Adrenal gland (tissue), 19 donors: ENCODE measurements at regions of chr3 and their contacts with region 1.

Region 1: GRCh38 chr3:138915503-138916498 is 31.1 kb downstream of the FOXL2 start:
- DNase-seq: peak; percentile 91 to 94 (median 93)
- H3K4me3 ChIP-seq: peak overlapping the region; percentile 68 to 90 (median 74)
- H3K27ac ChIP-seq: peak overlapping the region; percentile 39 to 94 (median 89)
- H3K4me1 ChIP-seq: peaks cover 5% of the 10 kb centered on the region in 2 donors
- H3K27me3 ChIP-seq: no peaks in the 10 kb centered on the region
- CTCF ChIP-seq: peak; percentile 84 to 97 (median 92)
- POLR2A ChIP-seq: peak in 1 of 2 donors; percentile 34

Region 2: DNA sequence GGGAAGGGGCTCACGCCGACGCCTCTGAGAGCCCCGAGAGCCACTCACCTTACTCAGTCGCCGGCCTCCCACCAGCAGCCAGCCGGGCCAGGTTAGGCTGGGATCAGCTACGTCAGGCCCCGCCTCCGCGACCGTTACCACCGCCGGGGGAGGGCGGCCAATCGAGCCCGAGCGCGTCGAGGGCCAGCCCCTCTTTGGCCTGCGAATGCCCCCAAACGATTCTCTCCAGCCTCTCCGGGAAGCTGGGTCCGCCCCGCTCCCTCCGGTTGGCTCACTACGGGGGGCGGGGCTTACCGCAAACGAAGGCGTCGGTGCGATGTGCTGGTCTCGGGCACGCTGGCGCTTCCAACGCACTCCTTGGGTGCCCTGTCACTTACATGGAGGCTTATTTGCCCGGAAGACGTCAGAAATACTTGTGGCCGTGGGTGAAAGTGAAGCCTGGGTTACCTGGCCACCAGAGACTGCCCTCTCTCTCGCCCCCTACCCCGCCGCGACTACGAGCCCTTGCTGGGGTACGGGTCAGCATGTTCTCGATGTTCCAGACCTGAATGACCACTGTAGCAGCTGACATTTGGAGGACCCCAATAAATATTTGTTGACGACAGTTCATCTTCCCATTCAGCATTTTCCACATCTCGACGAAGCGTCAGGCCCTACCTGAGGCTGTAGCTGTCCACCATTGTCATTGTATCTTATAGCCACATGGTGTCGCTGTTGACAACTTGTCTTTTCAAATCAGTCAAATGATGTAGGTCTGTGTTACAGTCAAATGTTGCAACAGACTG is 321.5 kb before region 1 on chr3 and contains the start of gene CEP70:
- intact Hi-C with region 1: loop called (anchors 2 to 5 kb)
- DNase-seq: peak; percentile 94 to 97 (median 96)
- H3K4me3 ChIP-seq: peak within 1 kb of the TSS in 3 of 4 donors; percentile 49 to 87 (median 60)
- H3K27ac ChIP-seq: peak within 1 kb of the TSS; percentile 86 to 98 (median 95)
- H3K4me1 ChIP-seq: peaks cover 5 to 11% of the 10 kb centered on the region in 2 donors
- H3K27me3 ChIP-seq: no peaks in the 10 kb centered on the region
- CTCF ChIP-seq: peak; percentile 77 to 98 (median 92)
- POLR2A ChIP-seq: peak; percentile 90 to 95
- total RNA-seq, gene CEP70: 7.8 to 26.9 (median 17.1) TPM

Region 3: GRCh38 chr3:138608322-138609135 is 307.3 kb before region 1 on chr3 and contains the start of gene FAIM:
- intact Hi-C with region 1: loop called in 1 of 2 experiments (anchors 5 kb)
- DNase-seq: peak; percentile 70 to 86 (median 80)
- H3K4me3 ChIP-seq: peak within 1 kb of the TSS; percentile 3 to 99 (median 78)
- H3K27ac ChIP-seq: peak within 1 kb of the TSS; percentile 59 to 99 (median 97)
- H3K4me1 ChIP-seq: peaks cover 0 to 10% of the 10 kb centered on the region in 2 donors
- H3K27me3 ChIP-seq: no peaks in the 10 kb centered on the region
- CTCF ChIP-seq: no peak
- POLR2A ChIP-seq: peak; percentile 34 to 46
- total RNA-seq, gene FAIM: 5.5 to 15.2 (median 7.8) TPM

Region 4: DNA sequence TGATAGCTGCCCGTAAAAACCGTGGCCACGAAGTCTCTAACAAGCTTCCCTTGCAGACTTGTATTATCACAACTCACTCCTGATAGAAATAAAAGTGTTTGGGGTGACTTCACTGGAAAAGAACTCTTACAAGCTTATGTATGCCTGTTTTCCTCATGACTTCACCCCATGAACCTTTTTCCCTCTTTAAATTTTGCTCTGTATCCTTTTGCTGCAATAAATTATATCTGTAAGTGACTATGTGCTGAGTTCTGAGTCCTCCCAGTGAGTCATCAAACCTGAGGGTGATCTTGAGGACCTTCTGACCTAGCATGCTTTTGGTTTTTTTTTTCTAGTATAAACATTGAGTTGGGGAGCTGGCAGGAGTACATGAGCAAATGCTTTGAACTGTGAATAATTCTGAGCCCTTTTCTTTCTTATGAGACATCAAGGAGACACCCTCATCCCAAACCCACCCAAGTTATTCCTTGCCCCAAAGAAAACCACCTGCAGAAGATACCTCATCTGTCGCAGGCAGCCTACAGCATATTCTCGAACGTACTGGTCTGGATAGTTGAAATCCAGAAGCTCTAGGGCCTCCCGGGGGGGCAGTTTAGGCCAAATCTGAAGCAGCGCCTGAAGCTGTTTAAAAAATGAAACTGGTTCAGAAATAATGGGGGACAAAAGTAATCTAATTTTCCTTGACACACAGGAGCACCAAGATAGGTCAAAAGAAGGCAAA is 221.4 kb before region 1 on chr3:
- intact Hi-C with region 1: loop called in 1 of 2 experiments (anchors 5 kb)
- DNase-seq: peak in 3 of 7 donors; percentile 16 to 48 (median 30)
- H3K4me3 ChIP-seq: no peak overlapping the region
- H3K27ac ChIP-seq: peak overlapping the region in 1 of 5 donors; percentile 17
- H3K4me1 ChIP-seq: peaks cover 0 to 10% of the 10 kb centered on the region in 2 donors
- H3K27me3 ChIP-seq: no peaks in the 10 kb centered on the region
- CTCF ChIP-seq: no peak
- POLR2A ChIP-seq: no peak

Region 5: GRCh38 chr3:138834359-138835212 is 81.2 kb before region 1 on chr3 and contains the start of gene PIK3CB:
- intact Hi-C with region 1: loop called in 1 of 2 experiments (anchors 5 kb)
- DNase-seq: peak; percentile 88 to 93 (median 93)
- H3K4me3 ChIP-seq: peak within 1 kb of the TSS; percentile 51 to 90 (median 88)
- H3K27ac ChIP-seq: peak within 1 kb of the TSS; percentile 82 to 98 (median 93)
- H3K4me1 ChIP-seq: peaks cover 0 to 15% of the 10 kb centered on the region in 2 donors
- H3K27me3 ChIP-seq: no peaks in the 10 kb centered on the region
- CTCF ChIP-seq: peak in 3 of 6 experiments; percentile 37 to 45 (median 38)
- POLR2A ChIP-seq: peak; percentile 92 to 97
- total RNA-seq, gene PIK3CB: 7.7 to 26.0 (median 16.0) TPM

Region 6: DNA sequence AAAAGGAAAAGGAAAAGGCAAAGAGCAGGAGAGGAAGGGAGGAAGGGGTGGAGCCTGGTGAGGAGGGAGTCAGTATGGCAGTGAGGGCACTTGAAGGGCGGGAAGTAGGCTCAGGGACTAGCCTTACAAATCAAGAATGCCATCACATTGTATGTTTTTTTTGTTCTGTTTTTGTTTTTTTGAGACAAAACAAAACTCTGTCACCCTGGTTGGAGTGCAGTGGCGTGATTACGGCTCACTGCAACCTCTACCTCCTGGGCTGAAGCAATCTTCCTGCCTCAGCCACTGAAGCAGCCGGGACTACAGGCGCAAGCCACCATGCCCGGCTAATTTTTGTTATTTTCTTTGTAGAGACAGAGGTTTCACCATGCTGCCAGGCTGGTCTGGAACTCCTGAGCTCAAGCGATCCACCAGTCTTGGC is 70.6 kb before region 1 on chr3:
- intact Hi-C with region 1: no loop called
- DNase-seq: no peak
- H3K4me3 ChIP-seq: no peak overlapping the region
- H3K27ac ChIP-seq: no peak overlapping the region
- H3K4me1 ChIP-seq: no peaks in the 10 kb centered on the region
- H3K27me3 ChIP-seq: no peaks in the 10 kb centered on the region
- CTCF ChIP-seq: no peak
- POLR2A ChIP-seq: no peak